Mammary epithelial cell (primary cell): ENCODE measurements at regions of chr1 and their contacts with region 1.

Region 1: GRCh38 chr1:197029749-197030148 is 37.3 kb downstream of the F13B start:
- DNase-seq: no peak
- H3K4me3 ChIP-seq: no peak overlapping the region
- H3K27ac ChIP-seq: no peak overlapping the region
- H3K4me1 ChIP-seq: peaks cover 6% of the 10 kb centered on the region
- H3K27me3 ChIP-seq: no peaks in the 10 kb centered on the region
- CTCF ChIP-seq: no peak

Region 2: DNA sequence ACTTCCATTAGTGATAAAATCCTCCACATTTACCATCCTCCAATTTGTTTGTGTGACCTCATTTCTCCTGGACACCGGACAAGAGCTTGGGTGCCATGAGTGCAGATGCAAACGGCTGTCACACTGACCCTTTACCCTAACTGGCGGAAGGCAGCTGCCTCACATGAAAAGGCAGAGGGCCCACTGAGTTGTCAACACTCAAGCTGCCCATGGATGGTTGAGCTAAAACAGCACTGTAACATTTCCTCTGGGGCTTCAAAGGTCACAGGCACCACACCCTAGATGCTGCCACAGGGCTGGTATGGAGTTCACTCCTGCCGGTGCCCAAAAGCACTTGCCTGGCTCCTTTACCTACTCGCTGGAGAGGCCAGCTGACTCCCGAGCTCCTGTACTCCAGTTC is 1074.9 kb before region 1 on chr1:
- CTCF ChIA-PET with region 1: no interaction called
- dilution Hi-C with region 1: no loop called
- in situ Hi-C with region 1: no loop called
- intact Hi-C with region 1: no loop called
- DNase-seq: no peak
- H3K4me3 ChIP-seq: no peak overlapping the region
- H3K27ac ChIP-seq: no peak overlapping the region
- H3K4me1 ChIP-seq: no peaks in the 10 kb centered on the region
- H3K27me3 ChIP-seq: no peaks in the 10 kb centered on the region
- CTCF ChIP-seq: no peak

Region 3: DNA sequence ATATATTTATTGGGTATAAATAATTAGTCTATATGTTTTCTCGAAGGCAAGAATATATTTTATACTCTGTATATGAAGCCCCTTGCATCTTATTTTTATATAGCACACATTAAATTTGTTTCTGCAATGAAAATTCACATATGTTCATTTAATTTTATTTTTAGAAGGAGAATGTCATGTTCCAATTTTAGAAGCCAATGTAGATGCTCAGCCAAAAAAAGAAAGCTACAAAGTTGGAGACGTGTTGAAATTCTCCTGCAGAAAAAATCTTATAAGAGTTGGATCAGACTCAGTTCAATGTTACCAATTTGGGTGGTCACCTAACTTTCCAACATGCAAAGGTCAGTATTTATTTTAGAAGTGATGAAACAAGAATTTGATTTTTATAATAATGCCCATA is 35.8 kb before region 1 on chr1:
- CTCF ChIA-PET with region 1: no interaction called
- dilution Hi-C with region 1: loop called (anchors 5 kb)
- in situ Hi-C with region 1: no loop called
- intact Hi-C with region 1: no loop called
- DNase-seq: no peak
- H3K4me3 ChIP-seq: no peak overlapping the region
- H3K27ac ChIP-seq: no peak overlapping the region
- H3K4me1 ChIP-seq: no peaks in the 10 kb centered on the region
- H3K27me3 ChIP-seq: peaks cover 2% of the 10 kb centered on the region
- CTCF ChIP-seq: no peak

Region 4: DNA sequence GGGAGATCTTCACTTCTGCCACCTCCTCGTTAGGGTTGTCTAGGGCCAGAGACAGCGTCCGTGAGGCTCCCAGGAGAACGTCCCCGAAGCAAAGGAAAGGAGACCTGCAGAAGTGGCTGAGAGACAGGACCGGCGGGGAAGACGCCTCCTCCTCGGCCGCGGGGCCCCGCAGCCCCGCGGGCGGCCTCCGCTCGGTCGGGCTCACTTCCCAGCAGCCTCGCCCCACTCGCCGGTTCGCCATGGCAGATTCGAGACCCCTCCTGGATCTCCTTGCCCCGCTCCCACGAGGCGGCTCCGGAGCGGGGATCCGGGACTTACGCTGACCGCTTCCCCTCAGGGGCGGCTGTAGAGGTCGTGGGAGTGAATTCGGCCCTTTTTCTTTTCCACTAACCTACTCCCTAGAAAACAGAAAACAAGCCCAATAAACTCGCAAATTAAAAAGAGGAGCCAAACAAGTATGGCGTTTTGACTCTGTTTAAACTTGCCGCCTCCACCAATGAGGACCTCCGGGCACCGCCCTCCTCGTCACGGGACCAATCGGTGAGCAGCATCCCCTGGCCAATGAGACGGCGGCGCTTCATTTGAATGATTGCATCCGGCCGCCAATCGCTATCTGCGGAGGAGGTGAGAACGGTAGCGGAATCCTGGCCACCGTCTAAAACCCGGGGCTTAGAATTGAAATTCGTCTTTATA is 116.6 kb after region 1 on chr1 and contains the start of gene ASPM:
- CTCF ChIA-PET with region 1: no interaction called
- dilution Hi-C with region 1: no loop called
- in situ Hi-C with region 1: no loop called
- intact Hi-C with region 1: loop called (anchors 10 kb)
- DNase-seq: peak; percentile 92
- H3K4me3 ChIP-seq: peak within 1 kb of the TSS; percentile 74 to 99 (median 96)
- H3K27ac ChIP-seq: peak within 1 kb of the TSS; percentile 83
- H3K4me1 ChIP-seq: peaks cover 4% of the 10 kb centered on the region
- H3K27me3 ChIP-seq: no peaks in the 10 kb centered on the region
- CTCF ChIP-seq: no peak
- total RNA-seq, gene ASPM: 3.2 to 21.9 TPM